Gastrocnemius medialis (tissue), 4 donors: ENCODE measurements at regions of chr17 and their contacts with region 1.

Region 1: GRCh38 chr17:64320613-64321553 is 57.8 kb upstream of the TEX2 start:
- DNase-seq: peak; percentile 27 to 36
- ATAC-seq: peak; percentile 67 to 78
- H3K4me3 ChIP-seq: peak overlapping the region in 3 of 4 donors; percentile 10 to 19 (median 14)
- H3K27ac ChIP-seq: peak overlapping the region in 3 of 4 donors; percentile 29 to 53 (median 50)
- H3K4me1 ChIP-seq: peaks cover 6 to 20% of the 10 kb centered on the region in 2 donors
- H3K27me3 ChIP-seq: no peaks in the 10 kb centered on the region
- CTCF ChIP-seq: peak; percentile 65 to 77 (median 69)
- POLR2A ChIP-seq: no peak

Region 2: DNA sequence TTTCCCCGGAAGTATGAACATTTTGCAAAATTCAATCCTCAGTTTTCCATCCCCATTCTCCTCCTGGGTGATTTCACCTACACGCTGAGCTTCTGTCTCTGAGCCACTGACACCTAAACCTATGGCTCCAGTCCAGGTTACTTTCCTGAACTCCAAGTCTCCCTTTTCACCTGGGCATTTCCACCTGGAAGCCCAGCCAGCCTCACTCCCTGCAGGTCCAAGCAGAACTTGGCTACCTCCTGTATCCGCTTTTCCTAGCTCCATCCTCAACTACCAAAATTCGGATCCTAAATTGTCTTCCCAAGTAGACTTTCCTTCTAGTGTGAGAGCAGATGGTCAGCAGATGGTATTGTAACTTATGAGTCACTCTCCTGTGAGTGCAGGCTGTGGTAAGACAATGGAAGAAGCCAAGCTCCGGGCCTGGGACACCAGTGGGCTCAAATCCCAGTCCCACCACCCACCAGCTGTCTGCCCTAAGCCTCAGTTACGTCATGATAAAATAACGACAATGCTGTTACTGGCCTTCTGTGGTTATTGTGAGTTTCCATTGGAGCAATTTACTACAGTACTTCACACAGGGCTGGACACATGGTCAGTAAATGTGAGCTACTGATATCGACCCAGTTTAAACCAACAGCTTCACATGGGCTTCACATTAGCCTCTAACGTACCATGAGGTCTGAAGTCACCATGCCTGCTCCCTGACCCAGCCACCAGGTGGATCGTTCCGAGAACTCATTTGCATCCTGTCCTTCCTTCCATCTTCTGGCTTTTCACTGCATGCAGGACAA is 36.5 kb after region 1 on chr17:
- in situ Hi-C with region 1: no loop called
- intact Hi-C with region 1: loop called (anchors 5 kb)
- DNase-seq: peak; percentile 38 to 74
- ATAC-seq: peak; percentile 80 to 84
- H3K4me3 ChIP-seq: no peak overlapping the region
- H3K27ac ChIP-seq: peak overlapping the region; percentile 58 to 67 (median 66)
- H3K4me1 ChIP-seq: peaks cover 3 to 10% of the 10 kb centered on the region in 2 donors
- H3K27me3 ChIP-seq: peaks cover 0 to 6% (median 0%) of the 10 kb centered on the region in 3 donors
- CTCF ChIP-seq: no peak
- POLR2A ChIP-seq: peak in 1 of 2 donors; percentile 9